HCT116 (cell line): ENCODE measurements at regions of chr2 and their contacts with region 1.

Region 1: GRCh38 chr2:219736209-219736608 is 108.8 kb downstream of the SLC4A3 start:
- DNase-seq: peak; percentile 44
- ATAC-seq: peak; percentile 64
- H3K4me3 ChIP-seq: no peak overlapping the region
- H3K27ac ChIP-seq: no peak overlapping the region
- H3K4me1 ChIP-seq: peaks cover 35 to 55% of the 10 kb centered on the region in 2 experiments
- H3K27me3 ChIP-seq: no peaks in the 10 kb centered on the region
- CTCF ChIP-seq: peak; percentile 35 to 63 (median 53); a peak in 4 of 6 replicates
- POLR2A ChIP-seq: no peak
- RAD21 ChIP-seq: peak; percentile 85

Region 2: DNA sequence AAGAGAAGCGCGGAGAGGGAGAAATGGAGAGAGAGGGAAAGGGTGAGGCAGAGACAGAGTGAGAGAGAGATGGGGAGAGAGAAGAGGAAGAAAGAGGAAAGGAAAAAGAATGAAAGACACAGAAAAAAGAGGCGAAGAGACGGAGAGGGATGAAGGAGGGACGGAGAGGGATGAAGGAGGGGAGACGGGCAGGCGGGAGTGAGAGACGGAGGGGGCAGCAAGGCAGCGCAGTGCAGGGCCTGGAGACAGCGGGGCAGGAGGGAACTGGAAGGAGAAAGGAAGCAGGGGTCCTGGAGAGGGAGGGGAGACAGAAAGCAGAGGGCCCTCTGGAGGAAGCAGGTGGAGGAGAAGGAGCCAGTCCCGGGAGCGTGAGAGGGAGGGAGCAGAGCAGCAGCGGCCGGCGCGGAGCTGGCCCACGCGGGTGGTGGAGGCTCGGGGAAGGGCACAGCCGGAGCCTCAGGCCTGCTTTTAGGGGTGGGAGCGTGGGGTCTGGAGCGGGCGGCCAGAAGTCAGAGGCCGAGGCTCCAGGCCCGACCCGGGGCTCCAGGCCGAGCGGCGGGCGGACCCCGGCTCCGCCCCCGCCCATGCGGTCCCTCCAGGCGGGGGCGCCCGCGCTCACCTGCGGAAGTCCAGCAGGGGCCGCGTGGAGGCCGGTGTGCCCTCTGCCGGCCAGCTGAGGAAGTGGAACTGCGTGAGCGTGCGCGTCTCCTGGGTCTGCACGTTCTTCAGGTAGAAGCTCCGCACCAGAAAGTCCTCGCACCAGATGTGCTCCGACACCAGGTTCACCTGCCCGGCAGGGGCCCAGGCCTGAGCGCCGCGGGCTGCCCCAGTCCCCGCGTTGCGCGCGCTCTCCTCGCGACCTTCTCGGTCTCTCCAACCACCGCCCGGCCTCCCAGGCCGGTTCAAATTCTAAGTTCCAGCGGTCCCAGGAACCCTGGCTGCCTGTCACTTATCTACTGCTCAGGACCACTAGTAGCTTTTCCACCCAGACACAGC is 441.6 kb before region 1 on chr2:
- CTCF ChIA-PET with region 1: no interaction called
- POLR2A ChIA-PET with region 1: no interaction called
- RAD21 ChIA-PET with region 1: no interaction called
- intact Hi-C with region 1: no loop called
- DNase-seq: peak; percentile 78
- ATAC-seq: peak; percentile 86
- H3K4me3 ChIP-seq: peak overlapping the region; percentile 33 to 50
- H3K27ac ChIP-seq: peak overlapping the region; percentile 25; the same call in 1 of the 2 replicates
- H3K4me1 ChIP-seq: peaks cover 7 to 20% of the 10 kb centered on the region in 2 experiments; a peak in 3 of 4 replicates
- H3K27me3 ChIP-seq: no peaks in the 10 kb centered on the region
- CTCF ChIP-seq: peak; percentile 94 to 99 (median 98)
- POLR2A ChIP-seq: no peak
- RAD21 ChIP-seq: peak; percentile 83

Region 3: GRCh38 chr2:220006152-220006621 is 270.0 kb after region 1 on chr2:
- CTCF ChIA-PET with region 1: interaction called, 3 read pairs
- POLR2A ChIA-PET with region 1: no interaction called
- RAD21 ChIA-PET with region 1: no interaction called
- intact Hi-C with region 1: loop called (anchors 10 kb)
- DNase-seq: no peak
- ATAC-seq: no peak
- H3K4me3 ChIP-seq: no peak overlapping the region
- H3K27ac ChIP-seq: no peak overlapping the region
- H3K4me1 ChIP-seq: peaks cover 11 to 17% of the 10 kb centered on the region in 2 experiments
- H3K27me3 ChIP-seq: no peaks in the 10 kb centered on the region
- CTCF ChIP-seq: no peak
- POLR2A ChIP-seq: no peak
- RAD21 ChIP-seq: no peak